SK-N-SH (cell line): ENCODE measurements at regions of chr5 and their contacts with region 1.

Region 1: GRCh38 chr5:41869739-41870626 is at the start of gene OXCT1:
- DNase-seq: peak; percentile 88
- H3K4me3 ChIP-seq: peak within 1 kb of the TSS; percentile 85 to 91
- H3K27ac ChIP-seq: peak within 1 kb of the TSS; percentile 72 to 89
- H3K4me1 ChIP-seq: peaks cover 6 to 12% of the 10 kb centered on the region in 2 experiments; a peak in 1 of 4 replicates
- H3K27me3 ChIP-seq: no peaks in the 10 kb centered on the region
- CTCF ChIP-seq: no peak
- EP300 ChIP-seq: no peak
- RAD21 ChIP-seq: no peak
- polyA plus RNA-seq, gene OXCT1: 11.7 and 14.9 TPM in 2 replicates

Region 2: DNA sequence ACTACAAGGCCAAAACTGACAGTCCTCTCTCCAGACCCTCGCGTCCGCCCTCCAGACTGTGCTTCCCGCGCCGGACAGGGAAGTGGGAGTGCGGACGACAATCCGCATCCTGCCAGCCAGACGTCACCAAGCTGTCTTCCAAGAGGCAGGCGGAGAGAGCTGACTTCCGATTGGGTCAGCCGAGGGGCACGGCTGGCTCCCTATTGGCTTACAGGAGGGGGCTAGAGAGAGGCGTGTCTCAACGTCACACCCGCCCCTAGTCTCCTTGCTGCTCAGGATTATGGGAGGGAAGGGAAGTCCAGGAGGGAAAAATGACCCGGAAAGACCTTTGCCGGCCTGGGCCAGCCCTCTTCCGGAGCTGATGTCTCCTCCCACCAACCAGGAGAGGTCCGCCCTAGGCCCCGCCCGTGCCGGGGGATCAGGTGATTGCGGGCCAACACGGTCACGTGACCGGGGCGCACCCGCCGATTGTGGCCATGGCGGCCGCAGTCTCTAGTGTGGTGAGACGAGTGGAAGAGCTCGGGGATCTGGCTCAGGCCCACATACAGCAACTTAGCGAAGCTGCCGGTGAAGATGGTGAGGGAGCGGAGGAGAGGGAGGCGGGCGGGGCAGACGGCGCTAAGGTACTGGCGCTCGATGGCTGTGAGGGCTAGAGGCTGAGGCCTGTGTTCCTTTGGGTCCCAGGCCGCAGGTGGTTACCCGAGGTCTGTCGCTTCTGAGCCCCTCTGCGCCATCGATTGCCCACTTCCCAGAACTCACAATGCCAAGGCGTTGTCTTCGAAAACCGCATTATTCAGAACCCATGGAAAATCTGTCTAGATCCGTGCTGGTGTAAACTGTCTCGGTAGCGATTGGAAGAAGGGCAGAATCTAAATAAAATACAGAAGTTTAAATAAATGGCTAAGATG is 34.2 kb after region 1 on chr5 and contains the start of gene RIMOC1:
- CTCF ChIA-PET with region 1: no interaction called
- POLR2A ChIA-PET with region 1: interaction called, 10 read pairs
- DNase-seq: peak; percentile 95
- H3K4me3 ChIP-seq: peak within 1 kb of the TSS; percentile 83 to 98
- H3K27ac ChIP-seq: peak within 1 kb of the TSS; percentile 75 to 82
- H3K4me1 ChIP-seq: peaks cover 8 to 10% of the 10 kb centered on the region in 2 experiments
- H3K27me3 ChIP-seq: no peaks in the 10 kb centered on the region
- CTCF ChIP-seq: no peak
- EP300 ChIP-seq: no peak
- RAD21 ChIP-seq: 0 out of 2 replicates have a peak, but pooled peaks have one; percentile 1
- polyA plus RNA-seq, gene RIMOC1: 6.5 and 9.5 TPM in 2 replicates

Region 3: GRCh38 chr5:42057254-42057690 is 187.3 kb after region 1 on chr5:
- CTCF ChIA-PET with region 1: interaction called, 10 read pairs
- POLR2A ChIA-PET with region 1: no interaction called
- DNase-seq: peak; percentile 46
- H3K4me3 ChIP-seq: peak overlapping the region in 1 of 2 experiments; percentile 10; a peak in 1 of 4 replicates
- H3K27ac ChIP-seq: no peak overlapping the region
- H3K4me1 ChIP-seq: no peaks in the 10 kb centered on the region; a peak in 1 of 4 replicates
- H3K27me3 ChIP-seq: no peaks in the 10 kb centered on the region; the same call in 1 of the 2 replicates
- CTCF ChIP-seq: peak; percentile 72
- EP300 ChIP-seq: no peak
- RAD21 ChIP-seq: peak; percentile 70

Region 4: DNA sequence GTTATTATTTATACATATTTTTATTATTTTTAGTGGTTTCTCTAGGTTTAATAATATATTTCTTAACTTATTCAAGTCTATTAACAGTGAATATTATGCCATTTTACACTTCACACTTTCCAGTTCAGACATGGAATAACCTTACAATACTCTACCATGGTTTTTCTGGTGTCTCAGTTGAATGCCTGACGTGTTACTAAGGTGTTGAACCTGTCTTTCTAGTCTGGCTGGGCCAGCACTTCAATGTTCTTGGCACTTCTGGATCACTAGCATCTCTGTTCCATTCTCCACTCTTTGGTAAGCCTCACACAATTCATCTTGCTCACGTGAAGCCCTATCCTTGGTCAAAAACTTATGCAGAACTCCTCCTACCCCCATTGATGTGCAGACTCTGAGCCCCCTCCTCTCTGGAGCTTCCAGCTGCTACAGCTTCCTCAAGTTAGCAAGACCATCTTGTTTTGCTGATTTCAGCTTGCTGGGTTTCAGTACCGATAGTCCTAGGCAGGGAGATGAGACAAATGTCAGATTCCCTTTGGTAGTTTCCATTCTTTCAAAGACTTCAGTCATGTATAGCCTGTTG is 298.2 kb after region 1 on chr5:
- CTCF ChIA-PET with region 1: no interaction called
- POLR2A ChIA-PET with region 1: no interaction called
- DNase-seq: no peak
- H3K4me3 ChIP-seq: no peak overlapping the region
- H3K27ac ChIP-seq: no peak overlapping the region
- H3K4me1 ChIP-seq: no peaks in the 10 kb centered on the region
- H3K27me3 ChIP-seq: no peaks in the 10 kb centered on the region
- CTCF ChIP-seq: no peak
- EP300 ChIP-seq: no peak
- RAD21 ChIP-seq: no peak